Caco-2 (cell line): ENCODE measurements at regions of chr12 and their contacts with region 1.

Region 1: DNA sequence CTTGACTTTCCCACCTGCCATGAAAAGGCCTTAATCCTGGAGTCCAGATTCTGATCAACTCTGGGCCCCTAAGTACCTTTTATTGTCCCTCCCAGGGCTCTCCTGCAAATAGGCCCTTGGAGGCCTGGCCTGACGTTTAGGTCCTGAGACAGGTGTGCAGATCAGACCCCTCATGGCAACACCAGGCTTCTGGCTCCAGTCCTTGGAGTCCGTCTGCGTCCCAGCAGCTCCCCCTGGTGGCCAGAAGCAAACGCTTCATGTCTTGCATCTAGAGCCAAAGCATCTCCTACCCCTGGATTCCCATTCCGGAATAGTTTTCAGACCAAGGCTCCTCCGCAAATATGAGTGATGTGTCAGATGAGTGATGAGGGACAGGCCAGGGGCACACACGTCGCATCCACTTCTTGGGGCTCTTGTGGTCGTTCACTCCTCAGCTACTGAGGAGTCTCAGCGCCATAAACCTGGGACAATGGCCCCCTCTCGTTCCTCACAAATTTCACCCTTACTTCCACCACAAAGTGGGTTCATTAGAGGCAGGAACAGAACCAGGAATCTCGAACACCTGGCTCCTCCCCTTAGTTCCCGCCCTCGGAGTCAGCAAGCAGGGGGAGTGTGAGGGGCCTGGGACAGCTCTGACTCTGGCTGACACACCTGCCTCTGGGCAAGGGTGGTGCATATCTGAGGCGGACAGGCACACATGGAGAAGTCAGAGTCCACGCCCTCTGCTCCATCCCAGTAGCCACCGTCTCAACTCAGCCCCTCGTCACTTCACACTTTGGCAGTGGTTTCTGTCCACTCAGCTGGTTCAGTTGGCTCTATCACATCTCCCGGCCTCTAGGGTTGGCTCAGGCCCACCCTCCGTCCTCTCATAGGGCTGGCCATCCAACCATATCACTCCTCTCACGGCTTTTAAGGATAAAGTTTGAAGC is 77.9 kb upstream of the PWP1 start:
- DNase-seq: peak; percentile 81 to 84
- H3K4me3 ChIP-seq: no peak overlapping the region
- H3K4me3 Mint-ChIP-seq: no peak overlapping the region
- H3K27ac Mint-ChIP-seq: no peak overlapping the region
- H3K4me1 ChIP-seq: no peaks in the 10 kb centered on the region
- H3K4me1 Mint-ChIP-seq: no peaks in the 10 kb centered on the region
- H3K27me3 ChIP-seq: no peaks in the 10 kb centered on the region
- H3K27me3 Mint-ChIP-seq: peaks cover 7% of the 10 kb centered on the region
- CTCF ChIP-seq: peak; percentile 84 to 91

Region 2: DNA sequence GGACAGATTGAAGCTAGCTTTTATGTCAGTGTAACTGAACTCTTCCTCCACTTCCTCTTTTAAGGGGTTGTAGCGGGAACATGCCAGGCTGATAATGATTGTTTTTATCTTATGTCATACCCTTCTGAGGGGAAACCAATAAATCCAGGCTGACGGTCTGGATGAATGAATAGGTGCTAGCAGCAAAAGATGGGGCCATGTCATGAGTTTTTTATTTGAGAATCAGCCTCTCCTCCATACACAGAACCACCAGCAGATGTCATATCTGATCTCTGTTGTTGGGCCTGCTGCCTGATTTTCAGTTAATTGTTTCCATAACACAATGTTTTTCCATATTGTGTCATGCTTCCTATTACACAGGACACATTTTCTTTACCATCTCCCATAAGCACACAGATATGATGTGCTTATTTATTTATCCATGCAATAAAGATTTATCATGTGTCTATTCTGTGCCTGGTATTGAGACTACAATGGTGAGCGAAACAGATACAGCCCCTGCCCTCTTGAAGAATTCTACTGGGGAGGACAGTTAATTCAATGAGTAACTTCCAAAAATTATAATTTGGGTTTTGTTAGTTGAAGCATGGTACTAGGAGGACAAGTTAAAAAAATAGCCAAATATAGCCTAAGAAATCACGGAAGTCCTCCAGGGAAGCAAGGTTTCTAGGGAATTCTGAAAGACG is 480.8 kb before region 1 on chr12:
- CTCF ChIA-PET with region 1: interaction called, 7 read pairs
- POLR2A ChIA-PET with region 1: no interaction called
- intact Hi-C with region 1: loop called (anchors 1 kb)
- DNase-seq: no peak
- H3K4me3 ChIP-seq: no peak overlapping the region
- H3K4me3 Mint-ChIP-seq: no peak overlapping the region
- H3K27ac Mint-ChIP-seq: no peak overlapping the region
- H3K4me1 ChIP-seq: no peaks in the 10 kb centered on the region
- H3K4me1 Mint-ChIP-seq: peaks cover 7% of the 10 kb centered on the region
- H3K27me3 ChIP-seq: no peaks in the 10 kb centered on the region
- H3K27me3 Mint-ChIP-seq: peaks cover 21% of the 10 kb centered on the region
- CTCF ChIP-seq: peak in 1 of 2 experiments; percentile 32

Region 3: GRCh38 chr12:107131832-107132616 is 475.7 kb before region 1 on chr12:
- CTCF ChIA-PET with region 1: interaction called, 7 read pairs
- POLR2A ChIA-PET with region 1: no interaction called
- intact Hi-C with region 1: loop called (anchors 1 kb)
- DNase-seq: peak in 1 of 2 experiments; percentile 60
- H3K4me3 ChIP-seq: no peak overlapping the region
- H3K4me3 Mint-ChIP-seq: no peak overlapping the region
- H3K27ac Mint-ChIP-seq: no peak overlapping the region
- H3K4me1 ChIP-seq: no peaks in the 10 kb centered on the region
- H3K4me1 Mint-ChIP-seq: no peaks in the 10 kb centered on the region
- H3K27me3 ChIP-seq: no peaks in the 10 kb centered on the region; the same call in 1 of the 2 replicates
- H3K27me3 Mint-ChIP-seq: peaks cover 3% of the 10 kb centered on the region
- CTCF ChIP-seq: peak; percentile 74 to 80

Region 4: DNA sequence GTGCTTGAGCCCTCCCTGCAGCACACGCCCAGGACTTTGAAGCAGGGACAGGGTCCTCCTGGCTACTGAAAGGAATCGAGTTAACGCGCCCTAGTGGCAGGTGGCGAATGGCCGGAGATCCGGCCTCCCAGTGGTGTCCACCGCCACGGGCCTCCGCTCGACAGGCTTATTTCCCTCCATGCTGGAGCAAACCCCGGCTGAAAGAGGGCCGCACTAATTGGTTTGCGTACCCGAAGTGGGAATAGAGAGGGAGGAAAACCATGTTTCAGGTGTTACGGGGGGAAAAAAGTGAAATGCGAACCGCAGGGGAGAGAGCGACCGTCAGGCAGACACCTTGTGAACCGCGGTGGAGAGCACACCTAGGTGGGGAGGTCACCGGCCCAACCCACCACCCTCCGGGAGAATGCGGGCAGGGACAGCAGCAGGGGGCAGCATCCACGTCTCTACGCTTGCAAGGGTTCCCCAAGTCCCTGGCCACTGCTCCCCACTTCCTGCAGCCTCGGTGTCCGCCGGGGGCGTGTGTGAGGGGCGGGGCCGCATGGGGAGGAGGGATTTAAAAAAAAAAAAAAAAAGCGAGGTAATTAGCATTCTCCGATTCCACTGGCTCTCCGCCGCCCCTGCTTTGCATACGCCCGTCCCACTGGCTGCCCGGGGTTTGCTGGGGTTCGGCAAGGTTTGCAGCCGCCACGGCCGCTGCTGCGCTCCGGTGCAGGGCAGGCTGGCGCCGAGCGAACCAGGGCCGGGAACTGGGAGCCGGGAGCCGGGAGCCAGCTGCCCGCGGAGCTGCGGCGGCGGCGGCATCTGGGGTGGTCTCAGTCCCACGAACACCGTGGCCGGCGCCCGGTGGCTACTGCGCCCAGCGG is 289.7 kb before region 1 on chr12:
- CTCF ChIA-PET with region 1: no interaction called
- POLR2A ChIA-PET with region 1: no interaction called
- intact Hi-C with region 1: loop called (anchors 5 kb)
- DNase-seq: peak; percentile 89 to 91
- H3K4me3 ChIP-seq: peak overlapping the region; percentile 60
- H3K4me3 Mint-ChIP-seq: peak overlapping the region; percentile 95
- H3K27ac Mint-ChIP-seq: no peak overlapping the region
- H3K4me1 ChIP-seq: peaks cover 11% of the 10 kb centered on the region; the same call in 1 of the 2 replicates
- H3K4me1 Mint-ChIP-seq: peaks cover 6% of the 10 kb centered on the region
- H3K27me3 ChIP-seq: peaks cover 6% of the 10 kb centered on the region
- H3K27me3 Mint-ChIP-seq: peaks cover 36% of the 10 kb centered on the region
- CTCF ChIP-seq: peak; percentile 37 to 48

Region 5: GRCh38 chr12:107402041-107403022 is 205.4 kb before region 1 on chr12:
- CTCF ChIA-PET with region 1: no interaction called
- POLR2A ChIA-PET with region 1: no interaction called
- intact Hi-C with region 1: loop called (anchors 2 kb)
- DNase-seq: peak; percentile 59 to 66
- H3K4me3 ChIP-seq: no peak overlapping the region
- H3K4me3 Mint-ChIP-seq: no peak overlapping the region
- H3K27ac Mint-ChIP-seq: no peak overlapping the region
- H3K4me1 ChIP-seq: no peaks in the 10 kb centered on the region
- H3K4me1 Mint-ChIP-seq: no peaks in the 10 kb centered on the region
- H3K27me3 ChIP-seq: no peaks in the 10 kb centered on the region
- H3K27me3 Mint-ChIP-seq: peaks cover 3% of the 10 kb centered on the region
- CTCF ChIP-seq: peak; percentile 58 to 67

Region 6: GRCh38 chr12:107545737-107546353 is 61.9 kb before region 1 on chr12:
- CTCF ChIA-PET with region 1: no interaction called
- POLR2A ChIA-PET with region 1: no interaction called
- intact Hi-C with region 1: loop called (anchors 5 kb)
- DNase-seq: no peak
- H3K4me3 ChIP-seq: no peak overlapping the region
- H3K4me3 Mint-ChIP-seq: no peak overlapping the region
- H3K27ac Mint-ChIP-seq: no peak overlapping the region
- H3K4me1 ChIP-seq: no peaks in the 10 kb centered on the region
- H3K4me1 Mint-ChIP-seq: no peaks in the 10 kb centered on the region
- H3K27me3 ChIP-seq: no peaks in the 10 kb centered on the region; the same call in 1 of the 2 replicates
- H3K27me3 Mint-ChIP-seq: peaks cover 12% of the 10 kb centered on the region
- CTCF ChIP-seq: no peak

Region 7: GRCh38 chr12:107736914-107737313 is 129.2 kb after region 1 on chr12:
- CTCF ChIA-PET with region 1: no interaction called
- POLR2A ChIA-PET with region 1: no interaction called
- intact Hi-C with region 1: no loop called
- DNase-seq: no peak
- H3K4me3 ChIP-seq: no peak overlapping the region
- H3K4me3 Mint-ChIP-seq: no peak overlapping the region
- H3K27ac Mint-ChIP-seq: no peak overlapping the region
- H3K4me1 ChIP-seq: no peaks in the 10 kb centered on the region
- H3K4me1 Mint-ChIP-seq: no peaks in the 10 kb centered on the region
- H3K27me3 ChIP-seq: no peaks in the 10 kb centered on the region
- H3K27me3 Mint-ChIP-seq: no peaks in the 10 kb centered on the region
- CTCF ChIP-seq: no peak